ENCODE measurements at regions of chr9 and their contacts with region 1.

Region 1: GRCh38 chr9:134024828-134025605 is at the start of gene BRD3OS:
- DNase-seq: peak; percentile 100
- H3K4me3 ChIP-seq: peak within 1 kb of the TSS; percentile 90
- H3K27ac ChIP-seq: peak within 1 kb of the TSS; percentile 31
- H3K27me3 ChIP-seq: no peaks in the 10 kb centered on the region
- CTCF ChIP-seq: no peak
- polyA plus RNA-seq, gene BRD3OS: 20.2 and 20.3 TPM in 2 replicates

Region 2: DNA sequence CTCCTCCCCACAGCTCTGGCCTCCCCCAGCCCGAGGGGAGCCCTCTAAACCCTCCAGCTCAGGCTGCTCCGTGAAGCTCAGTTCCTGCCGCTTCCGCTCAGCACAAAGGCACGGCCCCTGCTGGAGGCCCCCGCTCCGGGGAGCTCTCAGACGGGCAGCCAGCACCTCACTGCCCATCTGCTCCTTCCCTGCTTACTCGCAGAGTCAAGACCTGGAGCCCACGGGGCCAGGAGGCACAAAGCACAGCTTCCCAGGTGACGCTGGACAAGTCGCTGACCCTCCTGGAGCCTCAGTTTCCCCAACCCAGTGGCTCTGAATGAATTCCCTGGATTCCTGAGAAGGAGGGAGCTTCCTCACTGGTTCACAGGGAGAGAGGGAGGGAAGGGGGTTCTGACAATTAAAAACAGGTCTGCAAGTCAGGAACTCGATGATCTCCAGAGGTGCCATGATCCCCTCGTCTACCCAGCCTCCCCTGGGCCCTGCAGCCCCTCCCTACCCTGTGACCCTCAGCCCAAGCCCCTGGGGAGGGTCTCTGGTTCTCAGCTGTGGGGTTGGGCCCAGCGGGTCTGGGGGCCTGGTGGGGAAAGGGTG is 69.1 kb before region 1 on chr9:
- CTCF ChIA-PET with region 1: no interaction called
- POLR2A ChIA-PET with region 1: no interaction called
- DNase-seq: no peak
- H3K4me3 ChIP-seq: peak overlapping the region; percentile 37
- H3K27ac ChIP-seq: peak overlapping the region; percentile 68
- H3K27me3 ChIP-seq: no peaks in the 10 kb centered on the region
- CTCF ChIP-seq: peak; percentile 23; the same call in 1 of the 2 replicates

Region 3: GRCh38 chr9:133967014-133967741 is 57.8 kb before region 1 on chr9:
- CTCF ChIA-PET with region 1: interaction called, 10 read pairs
- POLR2A ChIA-PET with region 1: no interaction called
- DNase-seq: no peak
- H3K4me3 ChIP-seq: no peak overlapping the region
- H3K27ac ChIP-seq: no peak overlapping the region
- H3K27me3 ChIP-seq: no peaks in the 10 kb centered on the region
- CTCF ChIP-seq: no peak